Esophagus muscularis mucosa (tissue), 4 donors: ENCODE measurements at regions of chr4 and their contacts with region 1.

Region 1: DNA sequence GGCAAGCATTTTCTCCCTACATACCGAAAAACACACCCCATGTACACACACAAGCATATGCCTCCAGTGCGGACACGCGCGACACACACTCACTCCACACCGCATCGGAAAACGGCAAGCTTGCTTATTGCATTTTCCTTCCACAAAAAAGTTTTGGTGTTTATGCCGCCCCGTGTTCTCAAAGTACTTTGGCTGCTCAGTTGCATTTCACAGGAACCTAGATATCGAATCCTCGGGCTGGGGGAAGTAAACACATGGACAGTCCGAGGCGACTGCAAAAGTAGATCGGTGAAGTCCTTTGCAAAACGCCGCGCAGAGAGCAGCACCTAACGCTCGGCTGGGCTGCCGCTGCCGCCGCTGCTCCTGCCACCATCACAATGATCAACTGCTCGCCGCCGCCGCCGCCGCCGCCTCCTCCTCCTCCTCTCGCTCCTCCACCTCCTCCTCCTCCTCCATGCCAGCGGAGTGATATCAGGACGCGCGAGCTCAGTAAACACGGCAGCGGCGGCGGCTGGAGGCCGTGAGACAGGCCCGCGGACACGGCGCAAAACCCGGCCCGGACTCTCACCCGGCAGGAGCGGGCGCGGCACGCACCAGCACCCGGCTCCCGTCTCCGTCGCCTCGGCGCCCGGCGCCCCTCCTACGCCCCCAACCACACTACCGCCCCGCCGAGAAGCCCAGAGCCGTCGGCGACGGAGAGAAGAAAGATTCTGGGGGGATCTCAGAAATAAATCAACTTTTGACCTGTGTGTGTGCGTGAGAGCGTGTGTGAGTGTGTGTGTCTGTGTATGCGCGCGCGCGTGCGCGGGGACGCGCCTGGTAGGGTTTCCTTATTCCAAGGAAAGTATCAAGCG is at the start of gene MAML3:
- DNase-seq: peak; percentile 98
- H3K4me3 ChIP-seq: peak within 1 kb of the TSS; percentile 71 to 89 (median 86)
- H3K27ac ChIP-seq: peak within 1 kb of the TSS; percentile 97 to 99 (median 98)
- H3K4me1 ChIP-seq: peaks cover 0 to 34% (median 27%) of the 10 kb centered on the region in 4 donors
- H3K27me3 ChIP-seq: no peaks in the 10 kb centered on the region
- CTCF ChIP-seq: peak in 1 of 3 experiments; percentile 11
- EP300 ChIP-seq: no peak
- POLR2A ChIP-seq: peak; percentile 42
- total RNA-seq, gene MAML3: 5.0 to 8.7 (median 7.1) TPM

Region 2: GRCh38 chr4:139665690-139666529 is 488.0 kb before region 1 on chr4 and contains the start of gene MGST2:
- intact Hi-C with region 1: loop called (anchors 10 kb)
- DNase-seq: no peak
- H3K4me3 ChIP-seq: peak within 1 kb of the TSS; percentile 57 to 68 (median 62)
- H3K27ac ChIP-seq: peak within 1 kb of the TSS; percentile 83 to 91 (median 86)
- H3K4me1 ChIP-seq: peaks cover 23 to 43% (median 31%) of the 10 kb centered on the region in 4 donors
- H3K27me3 ChIP-seq: no peaks in the 10 kb centered on the region
- CTCF ChIP-seq: no peak
- EP300 ChIP-seq: no peak
- POLR2A ChIP-seq: no peak
- total RNA-seq, gene MGST2: 28.7 to 39.7 (median 34.2) TPM

Region 3: DNA sequence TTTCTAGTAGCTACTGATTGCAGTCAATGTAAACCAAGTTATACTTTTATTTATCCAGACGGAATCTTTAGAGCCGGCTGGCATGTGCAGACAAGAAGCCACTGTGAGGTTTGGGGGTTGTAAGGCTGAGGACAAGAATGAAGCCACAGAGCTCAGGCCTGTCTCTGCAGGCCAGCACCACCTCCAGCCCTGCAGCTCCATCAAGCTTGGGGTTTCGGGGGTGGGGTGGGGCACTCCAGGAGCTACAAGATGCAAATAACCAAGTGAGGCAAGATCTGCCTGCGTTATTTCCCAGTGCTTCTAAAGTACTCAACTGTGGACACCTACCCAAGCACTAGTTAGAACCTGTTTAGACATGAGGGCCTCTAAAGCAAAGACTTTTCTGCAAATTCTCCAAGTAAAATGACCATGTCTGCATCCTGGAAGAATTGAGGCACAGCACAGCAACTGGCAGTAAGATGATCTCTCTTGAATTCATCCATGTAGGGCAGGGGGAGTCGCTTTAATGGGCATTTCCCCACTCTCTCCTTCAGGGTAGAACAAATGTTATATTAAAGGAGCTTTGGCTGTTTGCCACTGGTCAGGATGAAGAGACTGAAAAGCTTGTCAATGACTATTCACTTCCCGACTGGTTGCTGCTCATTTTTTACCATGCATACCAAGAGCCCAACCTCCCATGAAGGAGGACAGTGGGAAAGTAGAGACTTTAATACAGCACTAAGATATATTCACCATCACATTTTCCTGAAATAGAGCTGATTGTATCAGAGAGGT is 265.8 kb before region 1 on chr4:
- intact Hi-C with region 1: loop called (anchors 10 kb)
- DNase-seq: peak; percentile 84
- H3K4me3 ChIP-seq: no peak overlapping the region
- H3K27ac ChIP-seq: peak overlapping the region; percentile 64 to 68 (median 66)
- H3K4me1 ChIP-seq: peaks cover 4 to 35% (median 32%) of the 10 kb centered on the region in 4 donors
- H3K27me3 ChIP-seq: no peaks in the 10 kb centered on the region
- CTCF ChIP-seq: no peak
- EP300 ChIP-seq: no peak
- POLR2A ChIP-seq: no peak

Region 4: DNA sequence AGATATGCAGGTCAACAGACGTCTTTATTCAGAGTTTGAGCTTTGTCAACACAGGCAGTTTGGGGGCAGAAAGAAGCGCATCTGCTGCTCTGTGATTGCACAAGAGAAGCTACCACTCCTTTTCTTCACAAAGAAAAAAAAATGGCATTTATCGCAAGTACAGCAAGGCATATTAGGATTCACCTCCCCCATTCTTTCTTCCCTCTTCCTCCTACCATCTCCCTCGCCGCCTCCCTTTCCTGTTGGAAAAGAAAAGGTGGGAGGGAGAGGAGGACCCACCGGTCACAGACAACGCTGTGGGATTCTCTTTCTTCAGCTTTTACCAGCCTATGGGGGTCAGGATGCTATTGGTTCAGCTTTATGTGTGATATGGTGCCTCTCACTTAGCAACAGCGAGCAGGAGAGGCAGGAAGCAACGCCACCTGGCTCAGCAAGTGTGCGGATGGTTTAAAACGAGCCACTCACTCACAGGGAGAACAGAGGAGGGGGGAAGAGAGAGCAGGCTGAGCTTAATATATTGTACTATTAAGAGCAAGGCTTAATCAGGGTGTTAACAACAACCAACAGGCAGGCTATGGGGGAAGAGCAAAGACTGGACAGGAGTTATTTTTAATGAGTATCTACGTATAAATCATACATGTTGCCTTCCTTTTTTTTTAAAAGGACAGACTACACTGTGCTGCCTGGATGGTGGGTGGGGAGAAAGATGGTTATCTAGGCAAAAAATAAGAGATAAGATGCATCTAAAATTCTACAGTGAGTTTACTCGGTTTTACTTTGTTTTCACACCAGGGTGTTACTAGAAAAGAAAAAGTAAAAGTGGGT is 104.7 kb before region 1 on chr4:
- intact Hi-C with region 1: loop called (anchors 5 kb)
- DNase-seq: no peak
- H3K4me3 ChIP-seq: peak overlapping the region; percentile 45 to 61 (median 53)
- H3K27ac ChIP-seq: peak overlapping the region; percentile 74 to 82 (median 76)
- H3K4me1 ChIP-seq: peaks cover 25 to 46% (median 44%) of the 10 kb centered on the region in 4 donors
- H3K27me3 ChIP-seq: no peaks in the 10 kb centered on the region
- CTCF ChIP-seq: peak; percentile 11 to 51 (median 43)
- EP300 ChIP-seq: no peak
- POLR2A ChIP-seq: no peak

Region 5: DNA sequence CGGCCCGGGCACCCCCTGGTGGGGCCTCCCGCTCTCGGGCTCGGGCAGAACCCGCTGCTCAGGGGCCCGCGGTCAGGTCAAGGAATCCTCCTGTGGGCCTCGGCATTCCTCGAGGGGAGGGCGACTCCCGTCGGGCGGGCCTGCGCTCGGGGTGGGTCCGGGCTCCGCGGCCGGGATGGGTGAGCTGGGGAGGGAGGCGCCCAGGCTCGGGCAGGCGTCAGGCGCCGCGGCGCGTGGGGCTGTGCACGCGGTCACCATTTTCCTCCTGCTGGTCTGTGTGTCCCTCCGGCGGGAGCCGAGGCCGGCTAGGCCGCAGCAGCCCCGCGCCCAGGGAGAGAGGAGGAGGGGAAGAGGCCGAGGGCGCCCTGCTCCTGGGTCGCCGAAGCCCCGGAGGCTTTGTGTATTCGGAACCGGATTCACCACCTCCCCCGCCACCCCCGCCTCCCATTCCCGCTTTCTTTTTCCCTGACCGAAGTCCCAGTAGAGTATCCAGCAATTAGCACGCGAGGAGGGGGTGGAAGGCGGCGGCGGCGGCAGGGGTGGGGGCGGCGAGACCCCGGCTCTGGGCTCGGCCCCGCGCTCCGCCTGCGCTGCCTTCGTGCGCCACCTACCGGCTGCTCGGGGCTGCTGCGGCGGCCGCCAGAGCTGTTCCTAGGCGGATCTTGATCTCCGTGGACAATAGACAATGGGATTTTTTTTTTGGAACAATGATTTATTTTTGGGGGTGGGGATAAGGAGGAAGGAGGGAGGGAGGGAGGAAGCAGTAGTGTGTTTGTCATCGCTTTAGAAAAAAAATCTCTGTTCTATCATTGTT is 99.0 kb after region 1 on chr4:
- intact Hi-C with region 1: loop called (anchors 1 kb)
- DNase-seq: peak; percentile 94
- H3K4me3 ChIP-seq: peak overlapping the region; percentile 65 to 80 (median 76)
- H3K27ac ChIP-seq: peak overlapping the region; percentile 86 to 96 (median 90)
- H3K4me1 ChIP-seq: peaks cover 8 to 62% (median 51%) of the 10 kb centered on the region in 4 donors
- H3K27me3 ChIP-seq: no peaks in the 10 kb centered on the region
- CTCF ChIP-seq: peak; percentile 90 to 97 (median 97)
- EP300 ChIP-seq: no peak
- POLR2A ChIP-seq: no peak